AG04450 (cell line): ENCODE measurements at regions of chr7 and their contacts with region 1.

Region 1: DNA sequence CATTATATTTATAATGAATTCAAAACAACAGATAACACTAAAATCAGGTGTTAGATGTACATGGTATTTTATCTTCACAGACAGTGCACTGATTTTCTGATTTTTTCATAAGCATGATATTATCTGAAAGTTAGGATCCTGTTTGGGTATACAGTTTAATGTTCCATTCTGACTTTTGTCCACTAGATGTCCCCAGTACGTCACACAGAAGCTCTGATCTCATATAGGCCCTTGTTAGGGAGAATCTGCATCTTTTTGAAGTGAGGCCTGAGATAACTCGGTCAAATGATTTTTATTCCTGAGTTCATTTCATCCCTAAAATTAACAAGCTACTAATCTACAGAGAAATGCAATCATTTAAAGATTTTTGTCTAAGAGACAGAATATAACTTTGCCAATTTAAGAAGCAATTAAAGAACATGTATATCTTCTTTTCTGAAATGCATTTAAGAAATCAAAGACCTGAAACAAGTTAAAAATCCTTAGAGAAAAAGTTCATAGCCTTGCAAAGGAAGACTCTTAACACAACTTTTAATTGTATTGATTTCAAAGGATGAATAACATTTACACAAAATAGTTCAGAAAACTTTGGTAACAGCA is 72.0 kb upstream of the TES start:
- DNase-seq: peak; percentile 57
- H3K4me3 ChIP-seq: no peak overlapping the region
- H3K27ac ChIP-seq: no peak overlapping the region
- H3K27me3 ChIP-seq: no peaks in the 10 kb centered on the region
- CTCF ChIP-seq: peak; percentile 89

Region 2: DNA sequence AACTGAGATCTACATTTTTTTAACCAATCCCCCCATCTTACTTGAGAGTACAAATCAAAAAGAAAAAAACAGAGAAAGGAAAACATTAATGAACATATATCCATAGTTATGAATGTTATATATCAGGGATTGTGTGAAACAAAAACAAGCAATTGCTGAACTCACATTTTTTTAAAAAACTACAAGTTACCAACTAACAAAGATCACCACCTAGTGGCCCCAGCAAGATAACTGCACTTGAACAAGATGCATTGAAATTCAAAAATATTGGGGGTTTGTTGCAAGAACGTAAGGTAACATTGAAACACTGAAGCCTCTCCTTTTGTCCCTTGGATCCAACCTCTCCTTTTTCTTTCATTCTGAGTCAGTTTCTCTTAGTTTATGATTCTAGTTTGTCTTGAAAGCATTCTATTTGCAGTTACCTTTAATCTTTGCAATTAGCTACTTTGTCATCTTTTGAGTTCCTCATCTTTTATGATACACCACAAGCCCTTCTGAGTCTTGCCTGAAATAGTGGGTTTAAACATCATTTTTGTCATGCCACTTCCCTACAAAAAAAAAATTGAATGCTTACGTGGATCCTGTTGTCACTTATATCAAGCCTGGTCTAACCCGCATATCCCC is 15.2 kb before region 1 on chr7:
- CTCF ChIA-PET with region 1: interaction called, 14 read pairs
- POLR2A ChIA-PET with region 1: no interaction called
- DNase-seq: peak; percentile 38
- H3K4me3 ChIP-seq: no peak overlapping the region
- H3K27ac ChIP-seq: no peak overlapping the region
- H3K27me3 ChIP-seq: no peaks in the 10 kb centered on the region
- CTCF ChIP-seq: peak; percentile 83

Region 3: GRCh38 chr7:116150588-116150987 is 12.3 kb after region 1 on chr7:
- CTCF ChIA-PET with region 1: interaction called, 17 read pairs
- POLR2A ChIA-PET with region 1: no interaction called
- DNase-seq: no peak
- H3K4me3 ChIP-seq: no peak overlapping the region
- H3K27ac ChIP-seq: no peak overlapping the region
- H3K27me3 ChIP-seq: no peaks in the 10 kb centered on the region
- CTCF ChIP-seq: no peak

Region 4: GRCh38 chr7:116165717-116166116 is 27.4 kb after region 1 on chr7:
- CTCF ChIA-PET with region 1: interaction called, 28 read pairs
- POLR2A ChIA-PET with region 1: no interaction called
- DNase-seq: no peak
- H3K4me3 ChIP-seq: no peak overlapping the region
- H3K27ac ChIP-seq: no peak overlapping the region
- H3K27me3 ChIP-seq: no peaks in the 10 kb centered on the region
- CTCF ChIP-seq: no peak

Region 5: DNA sequence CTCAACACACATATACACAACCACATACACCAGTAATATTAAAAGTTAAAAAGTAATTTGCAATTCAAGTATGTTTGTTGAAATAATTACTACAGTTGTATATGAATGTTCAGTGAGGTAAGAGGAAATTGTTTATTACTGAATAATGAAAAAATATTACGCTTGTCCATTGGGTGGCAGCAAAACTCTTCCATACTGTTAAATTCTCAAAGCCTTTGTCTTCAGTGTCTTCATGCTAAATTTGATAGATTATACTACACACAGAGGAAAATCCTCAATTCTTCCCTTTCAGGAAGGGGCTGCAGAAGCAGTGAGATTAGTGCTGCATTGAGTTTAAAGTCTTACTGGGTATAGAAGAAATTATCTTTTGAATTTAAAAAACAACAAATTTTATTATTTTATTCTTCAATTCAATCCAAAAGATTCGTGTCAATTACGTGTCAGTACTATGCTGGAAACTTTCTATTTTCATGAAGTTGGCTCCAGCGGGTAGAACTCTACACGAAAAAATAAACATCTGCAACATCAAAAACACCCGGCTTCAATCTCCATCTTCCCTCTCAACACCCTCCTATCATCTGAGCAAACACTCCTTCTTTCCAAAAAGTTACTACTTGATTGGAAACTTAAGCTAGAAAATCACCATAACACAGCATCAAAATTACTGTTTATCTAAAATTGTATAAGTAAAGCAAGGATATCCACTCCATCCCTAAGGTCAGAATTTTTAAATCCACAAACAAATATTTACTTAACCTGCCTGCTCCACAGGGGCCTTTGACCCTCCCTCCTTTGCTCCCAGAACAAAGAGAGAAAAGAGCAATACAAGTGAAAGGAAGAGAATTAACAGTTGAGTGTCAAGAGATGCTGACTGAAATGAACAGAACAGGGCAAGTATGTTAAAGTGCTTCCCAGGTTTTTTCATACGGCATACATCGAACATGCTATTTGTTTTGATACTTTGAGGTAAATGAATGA is 35.0 kb after region 1 on chr7:
- CTCF ChIA-PET with region 1: interaction called, 28 read pairs
- POLR2A ChIA-PET with region 1: no interaction called
- DNase-seq: peak; percentile 52
- H3K4me3 ChIP-seq: no peak overlapping the region
- H3K27ac ChIP-seq: no peak overlapping the region
- H3K27me3 ChIP-seq: no peaks in the 10 kb centered on the region
- CTCF ChIP-seq: peak; percentile 54

Region 6: GRCh38 chr7:116180302-116180701 is 42.0 kb after region 1 on chr7:
- CTCF ChIA-PET with region 1: interaction called, 15 read pairs
- POLR2A ChIA-PET with region 1: no interaction called
- DNase-seq: no peak
- H3K4me3 ChIP-seq: no peak overlapping the region
- H3K27ac ChIP-seq: no peak overlapping the region
- H3K27me3 ChIP-seq: no peaks in the 10 kb centered on the region
- CTCF ChIP-seq: peak; percentile 83

Region 7: GRCh38 chr7:116242178-116242577 is 103.9 kb after region 1 on chr7:
- CTCF ChIA-PET with region 1: interaction called, 55 read pairs
- POLR2A ChIA-PET with region 1: no interaction called
- DNase-seq: no peak
- H3K4me3 ChIP-seq: no peak overlapping the region
- H3K27ac ChIP-seq: no peak overlapping the region
- H3K27me3 ChIP-seq: no peaks in the 10 kb centered on the region
- CTCF ChIP-seq: peak; percentile 44

Region 8: GRCh38 chr7:116455009-116455408 is 316.7 kb after region 1 on chr7:
- CTCF ChIA-PET with region 1: no interaction called
- POLR2A ChIA-PET with region 1: no interaction called
- DNase-seq: no peak
- H3K4me3 ChIP-seq: no peak overlapping the region
- H3K27ac ChIP-seq: no peak overlapping the region
- H3K27me3 ChIP-seq: no peaks in the 10 kb centered on the region
- CTCF ChIP-seq: no peak